ENCODE measurements at regions of chr14 and their contacts with region 1.

Region 1: GRCh38 chr14:92951912-92952471 is 29.0 kb downstream of the CHGA start:
- DNase-seq: peak; percentile 84
- H3K4me3 ChIP-seq: no peak overlapping the region
- H3K27ac ChIP-seq: no peak overlapping the region
- H3K4me1 ChIP-seq: peaks cover 0 to 5% (median 0%) of the 10 kb centered on the region in 4 donors
- H3K27me3 ChIP-seq: no peaks in the 10 kb centered on the region
- CTCF ChIP-seq: peak; percentile 93 to 97 (median 95)
- EP300 ChIP-seq: no peak
- POLR2A ChIP-seq: no peak

Region 2: DNA sequence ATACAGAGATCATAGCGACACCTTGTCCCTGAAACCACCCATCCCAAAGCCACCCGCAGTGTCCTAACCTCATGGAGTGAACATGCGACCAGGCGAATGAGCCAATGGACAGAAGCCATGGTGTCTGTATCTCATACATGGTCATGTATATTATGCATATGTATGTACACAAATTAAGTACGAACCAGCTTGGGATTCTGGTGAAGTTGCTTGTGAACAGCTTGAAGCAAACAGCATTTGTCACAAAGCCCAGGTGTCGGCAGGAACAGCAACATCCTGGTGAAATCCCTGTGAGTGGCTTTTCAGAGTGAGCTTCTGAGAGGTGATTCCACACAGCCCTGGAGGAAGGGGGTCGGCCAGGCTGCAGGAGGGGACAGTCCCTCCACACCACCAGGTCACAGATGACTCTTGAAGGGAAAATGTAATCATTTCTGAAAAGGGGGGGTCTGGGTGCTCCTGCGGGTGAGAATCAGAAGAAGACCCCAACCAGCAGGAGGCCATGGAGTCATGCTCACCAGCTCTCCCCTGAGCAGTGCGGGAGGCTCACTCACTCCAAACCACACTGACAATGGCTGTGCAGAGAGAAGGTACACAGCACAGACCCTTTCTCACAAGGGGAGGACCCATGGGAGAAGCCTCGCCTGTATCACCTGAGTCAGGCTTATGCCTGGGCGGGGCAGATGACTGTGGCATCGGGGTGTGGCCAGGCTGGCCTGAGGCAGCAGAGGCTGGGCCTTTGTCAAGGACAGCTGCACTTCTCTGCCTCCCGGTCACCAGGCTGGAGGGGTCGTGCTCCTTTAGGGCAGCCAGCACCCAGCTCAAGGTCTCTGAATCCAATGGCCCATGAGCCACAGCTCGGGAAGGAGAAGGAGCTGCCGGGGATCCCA is 14.7 kb before region 1 on chr14:
- in situ Hi-C with region 1: no loop called
- intact Hi-C with region 1: no loop called
- DNase-seq: peak; percentile 36
- H3K4me3 ChIP-seq: no peak overlapping the region
- H3K27ac ChIP-seq: no peak overlapping the region
- H3K4me1 ChIP-seq: no peaks in the 10 kb centered on the region
- H3K27me3 ChIP-seq: no peaks in the 10 kb centered on the region
- CTCF ChIP-seq: no peak
- EP300 ChIP-seq: no peak
- POLR2A ChIP-seq: no peak

Region 3: GRCh38 chr14:93115069-93115820 is 163.3 kb after region 1 on chr14:
- in situ Hi-C with region 1: no loop called
- intact Hi-C with region 1: loop called (anchors 5 kb)
- DNase-seq: peak; percentile 93
- H3K4me3 ChIP-seq: peak overlapping the region; percentile 90 to 93 (median 92)
- H3K27ac ChIP-seq: peak overlapping the region; percentile 96 to 100 (median 99)
- H3K4me1 ChIP-seq: peaks cover 4 to 35% (median 28%) of the 10 kb centered on the region in 4 donors
- H3K27me3 ChIP-seq: no peaks in the 10 kb centered on the region
- CTCF ChIP-seq: no peak
- EP300 ChIP-seq: no peak
- POLR2A ChIP-seq: peak; percentile 78

Region 4: DNA sequence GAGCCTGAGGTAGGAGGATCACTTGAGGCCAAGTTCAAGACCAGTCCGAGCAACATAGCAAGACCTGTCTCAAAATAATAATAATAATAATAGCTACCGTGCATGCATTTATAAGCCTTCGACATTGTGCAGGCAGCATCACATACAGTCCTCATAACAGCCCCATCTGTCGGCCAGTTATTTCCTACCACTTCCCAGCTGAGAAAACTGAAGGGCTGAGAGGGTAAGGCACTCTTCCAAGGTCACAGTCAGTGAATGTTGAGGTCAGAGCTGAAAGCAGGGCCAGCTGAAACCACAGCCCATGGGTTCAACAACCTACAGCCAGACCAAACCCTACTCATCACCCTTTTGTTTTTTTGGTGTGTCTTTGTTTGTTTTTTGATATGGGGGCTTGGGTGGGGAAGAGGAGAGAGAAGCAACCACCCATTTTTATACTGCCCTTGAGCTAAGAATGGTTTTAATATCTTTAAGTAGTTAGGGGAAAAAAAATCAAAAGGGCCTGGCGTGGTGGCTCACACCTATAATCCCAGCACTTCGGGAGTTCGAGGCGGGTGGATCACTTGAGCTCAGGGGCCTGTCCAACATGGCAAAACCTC is 180.6 kb after region 1 on chr14:
- in situ Hi-C with region 1: loop called in 2 of 4 experiments (anchors 10 kb)
- intact Hi-C with region 1: no loop called
- DNase-seq: no peak
- H3K4me3 ChIP-seq: no peak overlapping the region
- H3K27ac ChIP-seq: peak overlapping the region; percentile 4 to 16 (median 8)
- H3K4me1 ChIP-seq: peaks cover 0 to 32% (median 8%) of the 10 kb centered on the region in 4 donors
- H3K27me3 ChIP-seq: no peaks in the 10 kb centered on the region
- CTCF ChIP-seq: peak; percentile 37 to 51 (median 43)
- EP300 ChIP-seq: no peak
- POLR2A ChIP-seq: no peak

Region 5: GRCh38 chr14:93137864-93138263 is 185.9 kb after region 1 on chr14:
- in situ Hi-C with region 1: loop called (anchors 5 to 10 kb)
- intact Hi-C with region 1: loop called (anchors 2 kb)
- DNase-seq: peak; percentile 88
- H3K4me3 ChIP-seq: no peak overlapping the region
- H3K27ac ChIP-seq: no peak overlapping the region
- H3K4me1 ChIP-seq: peaks cover 0 to 36% (median 16%) of the 10 kb centered on the region in 4 donors
- H3K27me3 ChIP-seq: no peaks in the 10 kb centered on the region
- CTCF ChIP-seq: peak in 4 of 5 experiments; percentile 19 to 58 (median 40)
- EP300 ChIP-seq: no peak
- POLR2A ChIP-seq: no peak

Region 6: DNA sequence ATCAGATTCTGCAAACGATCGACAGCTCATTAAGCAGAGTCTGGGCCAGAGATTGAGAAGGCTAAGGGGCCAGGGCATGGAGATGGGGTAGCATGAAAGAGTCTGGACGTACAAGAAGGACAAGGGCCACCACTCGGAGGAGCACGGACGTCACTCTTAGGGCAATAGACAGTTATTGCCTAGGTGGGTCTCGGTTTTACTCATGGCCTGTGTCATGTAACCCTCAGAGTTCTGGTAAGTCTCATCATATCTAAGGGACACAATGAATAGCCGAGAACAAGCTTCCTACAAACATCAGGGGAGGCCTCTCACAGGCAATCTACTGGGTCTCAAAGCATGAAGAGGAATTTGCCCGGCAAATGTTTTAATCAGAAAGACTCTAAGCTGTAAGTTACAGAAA is 194.1 kb after region 1 on chr14:
- in situ Hi-C with region 1: loop called in 2 of 4 experiments (anchors 5 to 10 kb)
- intact Hi-C with region 1: no loop called
- DNase-seq: no peak
- H3K4me3 ChIP-seq: no peak overlapping the region
- H3K27ac ChIP-seq: no peak overlapping the region
- H3K4me1 ChIP-seq: peaks cover 0 to 12% (median 2%) of the 10 kb centered on the region in 4 donors
- H3K27me3 ChIP-seq: no peaks in the 10 kb centered on the region
- CTCF ChIP-seq: no peak
- EP300 ChIP-seq: no peak
- POLR2A ChIP-seq: no peak